Activated naive CD4-positive, alpha-beta T cell treated with anti-CD3 and anti-CD28 coated beads for 36 hours (primary cell): ENCODE measurements at regions of chr3 and their contacts with region 1.

Region 1: DNA sequence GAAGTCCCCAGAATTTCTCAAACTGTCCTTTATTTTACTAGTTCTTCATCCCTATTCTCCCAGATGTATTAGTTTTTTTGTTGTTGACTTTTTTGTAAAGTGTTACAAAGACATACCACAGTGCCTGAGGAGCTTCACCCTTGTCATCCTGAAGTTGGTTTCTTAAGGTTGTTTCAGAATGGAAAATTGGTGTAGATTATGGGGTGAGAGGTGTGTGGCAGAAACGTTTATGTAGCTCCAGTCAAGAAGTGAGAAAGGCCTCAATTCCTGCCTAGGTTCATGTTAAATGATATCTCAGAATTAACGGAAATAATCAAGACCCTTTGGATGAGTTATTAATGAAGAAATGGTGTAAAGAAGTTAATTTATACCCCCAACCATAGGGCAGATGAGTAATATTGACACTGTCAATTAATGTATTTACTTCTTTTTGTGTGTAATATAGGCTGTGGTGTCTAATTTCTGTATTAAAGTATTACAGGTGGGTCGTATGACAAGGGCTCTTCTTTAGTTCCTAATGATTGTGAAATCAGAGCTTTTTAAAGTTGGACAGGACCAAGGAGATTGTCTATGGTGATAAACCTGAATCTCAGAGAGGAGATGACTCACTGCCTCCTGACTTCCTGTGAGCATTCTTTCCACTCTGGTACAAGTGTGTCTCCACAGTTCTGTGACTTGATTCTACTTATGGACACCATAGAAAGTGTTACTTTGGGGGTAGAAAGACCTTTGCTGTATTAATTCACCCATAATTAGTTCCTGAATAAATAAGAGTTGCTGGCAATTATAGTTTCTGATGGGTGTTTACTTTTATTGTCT is 7.0 kb downstream of the EDEM1 start:
- DNase-seq: peak; percentile 66
- H3K4me3 Mint-ChIP-seq: peak overlapping the region; percentile 25
- H3K27ac Mint-ChIP-seq: peak overlapping the region; percentile 98
- H3K4me1 Mint-ChIP-seq: peaks cover 84% of the 10 kb centered on the region
- H3K27me3 Mint-ChIP-seq: no peaks in the 10 kb centered on the region

Region 2: GRCh38 chr3:4584456-4585249 is 609.9 kb before region 1 on chr3:
- CTCF ChIA-PET with region 1: no interaction called
- intact Hi-C with region 1: loop called (anchors 5 kb)
- DNase-seq: peak; percentile 72
- H3K4me3 Mint-ChIP-seq: peak overlapping the region; percentile 70
- H3K27ac Mint-ChIP-seq: peak overlapping the region; percentile 83
- H3K4me1 Mint-ChIP-seq: peaks cover 61% of the 10 kb centered on the region
- H3K27me3 Mint-ChIP-seq: no peaks in the 10 kb centered on the region

Region 3: DNA sequence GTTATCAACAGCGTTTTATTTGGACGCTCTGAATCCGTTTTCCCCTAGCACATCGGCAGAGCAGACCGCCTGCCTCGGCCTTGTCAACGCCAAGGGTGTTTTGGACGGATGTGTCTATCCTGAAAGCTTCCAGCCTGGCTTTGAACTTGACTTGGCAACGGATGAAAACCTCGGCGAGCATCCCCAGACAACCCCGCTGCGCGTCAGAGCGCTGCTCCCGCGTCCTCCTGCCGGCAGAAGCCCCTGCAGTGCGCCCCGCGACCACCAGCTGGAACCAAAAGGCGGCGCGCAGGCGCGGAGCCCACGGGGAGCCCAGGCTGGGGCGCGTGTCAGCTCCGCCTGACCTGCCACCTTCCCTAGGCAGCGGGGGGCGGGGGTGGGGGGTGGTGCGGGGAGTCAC is 98.7 kb before region 1 on chr3:
- CTCF ChIA-PET with region 1: no interaction called
- intact Hi-C with region 1: no loop called
- DNase-seq: no peak
- H3K4me3 Mint-ChIP-seq: peak overlapping the region; percentile 7
- H3K27ac Mint-ChIP-seq: no peak overlapping the region
- H3K4me1 Mint-ChIP-seq: peaks cover 7% of the 10 kb centered on the region
- H3K27me3 Mint-ChIP-seq: peaks cover 26% of the 10 kb centered on the region

Region 4: GRCh38 chr3:5122030-5122740 is 72.4 kb before region 1 on chr3 and contains the start of gene ARL8B:
- CTCF ChIA-PET with region 1: interaction called, 54 read pairs
- intact Hi-C with region 1: loop called (anchors 1 kb)
- DNase-seq: peak; percentile 94
- H3K4me3 Mint-ChIP-seq: peak within 1 kb of the TSS; percentile 90
- H3K27ac Mint-ChIP-seq: peak within 1 kb of the TSS; percentile 90
- H3K4me1 Mint-ChIP-seq: peaks cover 39% of the 10 kb centered on the region
- H3K27me3 Mint-ChIP-seq: no peaks in the 10 kb centered on the region
- total RNA-seq, gene ARL8B: 38.4 to 39.3 TPM

Region 5: DNA sequence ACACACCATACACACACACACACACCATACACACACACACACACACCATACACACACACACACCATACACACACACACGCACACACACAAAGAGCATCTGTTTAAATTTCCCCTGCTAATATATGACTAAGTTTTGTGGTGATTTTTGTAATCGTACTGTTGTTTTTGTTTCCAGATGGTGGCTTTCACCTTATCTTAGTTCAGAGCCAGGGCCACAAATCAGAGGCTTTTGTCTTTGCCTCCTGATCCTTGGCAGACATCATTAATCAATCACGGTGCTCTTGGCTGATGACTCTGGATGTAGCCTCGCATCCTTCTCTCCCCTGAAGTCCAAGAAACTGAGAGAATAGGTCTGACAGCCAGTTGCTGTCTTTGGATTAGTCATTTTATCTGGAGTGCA is 45.1 kb after region 1 on chr3:
- CTCF ChIA-PET with region 1: no interaction called
- intact Hi-C with region 1: loop called (anchors 1 kb)
- DNase-seq: peak; percentile 14
- H3K4me3 Mint-ChIP-seq: no peak overlapping the region
- H3K27ac Mint-ChIP-seq: no peak overlapping the region
- H3K4me1 Mint-ChIP-seq: no peaks in the 10 kb centered on the region
- H3K27me3 Mint-ChIP-seq: no peaks in the 10 kb centered on the region